Activated CD4-positive, alpha-beta T cell treated with anti-CD3 and anti-CD28 coated beads for 36 hours (primary cell): ENCODE measurements at regions of chr1 and their contacts with region 1.

Region 1: DNA sequence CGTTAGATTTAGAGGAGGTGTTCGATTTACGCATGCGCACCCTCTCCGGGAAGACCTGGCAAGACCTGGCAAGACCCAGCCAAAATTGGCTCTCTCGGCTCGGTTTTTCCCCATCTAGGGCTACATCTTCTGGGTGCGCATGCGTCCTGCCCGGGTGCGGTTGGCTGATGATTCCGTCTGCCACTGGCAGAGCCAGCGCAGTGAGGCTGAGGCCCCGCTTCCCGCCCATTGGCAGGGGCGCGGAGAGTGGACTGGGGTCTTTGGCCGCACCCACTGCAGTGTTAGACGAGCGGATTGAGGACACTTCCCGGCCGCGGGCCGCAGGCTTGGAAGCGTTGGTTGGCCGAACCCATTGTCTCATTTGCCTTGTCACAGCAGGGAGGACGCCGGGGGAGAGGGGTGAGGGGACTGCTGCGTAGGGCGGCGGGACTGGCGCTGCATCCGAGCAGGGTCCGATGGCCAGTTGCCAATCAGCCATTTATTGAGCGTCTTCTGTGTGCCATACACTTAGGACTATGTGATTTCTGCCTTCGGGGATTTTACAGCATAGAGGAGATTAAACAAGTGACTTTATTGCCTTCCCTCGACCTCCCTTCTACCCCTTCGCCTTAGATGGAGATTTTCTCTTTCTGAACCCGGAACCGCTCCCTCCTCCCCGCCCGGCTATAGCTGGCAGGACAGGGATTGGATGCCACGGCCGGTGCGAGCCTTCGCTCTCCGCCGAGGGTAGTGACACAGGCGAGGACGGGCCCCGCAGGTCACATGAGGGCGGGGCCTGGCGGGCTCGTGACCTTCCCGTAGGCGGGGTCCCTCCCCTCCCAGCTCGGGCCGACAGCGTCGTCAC is 43.7 kb downstream of the MEF2D start:
- DNase-seq: peak; percentile 99
- ATAC-seq: peak; percentile 88
- H3K4me3 Mint-ChIP-seq: peak overlapping the region; percentile 79
- H3K27ac Mint-ChIP-seq: peak overlapping the region; percentile 98
- H3K4me1 Mint-ChIP-seq: peaks cover 22% of the 10 kb centered on the region
- H3K27me3 Mint-ChIP-seq: no peaks in the 10 kb centered on the region

Region 2: GRCh38 chr1:156193488-156194299 is 263.1 kb before region 1 on chr1 and contains the start of gene SLC25A44:
- CTCF ChIA-PET with region 1: no interaction called
- POLR2A ChIA-PET with region 1: no interaction called
- intact Hi-C with region 1: loop called in 1 of 2 experiments (anchors 1 kb)
- DNase-seq: peak; percentile 98
- ATAC-seq: peak; percentile 96
- H3K4me3 Mint-ChIP-seq: peak within 1 kb of the TSS; percentile 100
- H3K27ac Mint-ChIP-seq: peak within 1 kb of the TSS; percentile 97
- H3K4me1 Mint-ChIP-seq: peaks cover 43% of the 10 kb centered on the region
- H3K27me3 Mint-ChIP-seq: no peaks in the 10 kb centered on the region
- total RNA-seq, gene SLC25A44: 42.4 to 51.9 TPM

Region 3: GRCh38 chr1:156480411-156481192 is 23.8 kb after region 1 on chr1:
- CTCF ChIA-PET with region 1: interaction called, 8 read pairs
- POLR2A ChIA-PET with region 1: no interaction called
- intact Hi-C with region 1: loop called in 1 of 2 experiments (anchors 2 kb)
- DNase-seq: peak; percentile 89
- ATAC-seq: peak; percentile 82
- H3K4me3 Mint-ChIP-seq: peak overlapping the region; percentile 25
- H3K27ac Mint-ChIP-seq: peak overlapping the region; percentile 72
- H3K4me1 Mint-ChIP-seq: peaks cover 64% of the 10 kb centered on the region
- H3K27me3 Mint-ChIP-seq: no peaks in the 10 kb centered on the region

Region 4: DNA sequence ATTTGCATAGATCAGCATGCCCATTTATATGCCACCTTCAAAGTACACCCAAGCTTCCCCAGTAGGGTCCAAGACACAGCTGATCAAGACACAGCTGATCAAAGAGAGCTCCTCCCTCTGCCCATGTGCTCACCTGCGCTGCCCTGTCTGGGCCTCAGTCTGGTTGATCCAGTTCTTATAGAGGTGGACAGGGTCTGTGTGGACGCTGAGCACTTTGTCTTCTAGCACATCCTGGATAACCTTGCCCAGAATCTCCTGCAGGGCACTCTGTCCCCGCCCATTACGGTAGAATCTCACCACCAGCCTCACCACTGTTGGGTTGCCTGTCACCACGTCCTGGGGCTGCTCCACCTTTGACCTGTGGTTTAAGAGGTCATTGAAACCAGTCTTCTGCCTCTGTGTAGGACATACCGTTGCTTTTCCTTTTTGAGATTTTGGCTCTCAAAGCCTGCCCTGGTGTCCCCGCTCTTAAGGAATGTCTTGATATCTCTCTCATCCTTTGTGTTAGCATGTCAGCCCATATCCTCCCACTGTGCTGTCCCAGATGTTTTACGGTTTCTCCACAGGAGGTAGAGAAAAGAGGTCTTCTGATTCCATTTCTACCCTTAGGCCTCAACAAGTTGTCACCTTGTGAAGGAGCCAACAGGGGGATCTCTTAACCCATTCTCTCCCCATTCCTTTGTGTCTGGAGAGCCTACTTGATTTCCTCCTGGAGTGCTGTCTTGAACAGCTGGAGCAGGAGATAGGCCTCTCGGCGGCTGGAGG is 82.0 kb after region 1 on chr1:
- CTCF ChIA-PET with region 1: no interaction called
- POLR2A ChIA-PET with region 1: no interaction called
- intact Hi-C with region 1: no loop called
- DNase-seq: no peak
- ATAC-seq: no peak
- H3K4me3 Mint-ChIP-seq: no peak overlapping the region
- H3K27ac Mint-ChIP-seq: no peak overlapping the region
- H3K4me1 Mint-ChIP-seq: no peaks in the 10 kb centered on the region
- H3K27me3 Mint-ChIP-seq: no peaks in the 10 kb centered on the region

Region 5: DNA sequence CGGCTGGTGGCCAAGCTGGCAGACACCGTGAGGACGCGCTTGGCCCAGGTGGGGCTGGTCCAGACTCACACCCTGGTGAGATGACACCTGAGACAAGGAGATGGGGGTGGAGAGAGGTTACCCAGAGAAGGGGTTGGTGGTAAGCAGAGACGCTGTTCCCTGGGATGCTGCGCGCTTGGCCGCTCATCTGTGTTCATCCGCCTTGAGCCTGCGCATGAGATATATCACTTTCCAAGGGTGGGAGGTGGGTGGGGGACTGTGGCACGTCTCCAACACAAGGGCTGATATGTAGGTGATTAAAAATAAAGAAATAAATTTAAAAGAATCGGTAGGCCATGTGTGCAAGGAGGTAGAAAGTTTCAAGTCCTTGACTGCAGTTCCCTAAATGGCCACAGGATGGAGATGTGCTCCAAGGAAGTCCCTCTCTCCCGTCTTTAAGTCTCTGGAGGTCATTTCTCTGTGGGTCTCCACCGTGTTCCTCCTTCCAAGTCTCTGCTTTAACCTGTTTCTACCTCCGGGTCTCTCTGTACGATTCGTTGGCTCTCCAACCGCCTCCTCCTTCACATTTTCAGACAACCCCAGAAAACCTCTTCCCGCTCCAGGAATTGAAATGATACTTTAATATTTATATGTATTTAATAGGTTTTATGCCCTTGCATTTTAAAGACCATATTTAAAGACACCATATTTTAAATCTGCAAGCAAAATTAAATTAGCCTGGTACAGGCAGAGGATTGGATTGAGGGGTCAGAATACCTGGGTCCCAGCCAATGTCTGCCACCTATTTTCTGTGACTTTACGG is 127.2 kb after region 1 on chr1:
- CTCF ChIA-PET with region 1: interaction called, 7 read pairs
- POLR2A ChIA-PET with region 1: no interaction called
- intact Hi-C with region 1: loop called in 1 of 2 experiments (anchors 1 kb)
- DNase-seq: peak; percentile 88
- ATAC-seq: peak; percentile 43
- H3K4me3 Mint-ChIP-seq: peak overlapping the region; percentile 74
- H3K27ac Mint-ChIP-seq: peak overlapping the region; percentile 51
- H3K4me1 Mint-ChIP-seq: peaks cover 27% of the 10 kb centered on the region
- H3K27me3 Mint-ChIP-seq: no peaks in the 10 kb centered on the region

Region 6: GRCh38 chr1:156601122-156601830 is 144.4 kb after region 1 on chr1 and contains the start of gene GPATCH4:
- CTCF ChIA-PET with region 1: interaction called, 6 read pairs
- POLR2A ChIA-PET with region 1: interaction called, 5 read pairs
- intact Hi-C with region 1: loop called (anchors 1 to 2 kb)
- DNase-seq: peak; percentile 89
- ATAC-seq: peak; percentile 76
- H3K4me3 Mint-ChIP-seq: peak within 1 kb of the TSS; percentile 97
- H3K27ac Mint-ChIP-seq: peak within 1 kb of the TSS; percentile 99
- H3K4me1 Mint-ChIP-seq: peaks cover 45% of the 10 kb centered on the region
- H3K27me3 Mint-ChIP-seq: no peaks in the 10 kb centered on the region
- total RNA-seq, gene GPATCH4: 38.5 to 48.7 TPM

Region 7: DNA sequence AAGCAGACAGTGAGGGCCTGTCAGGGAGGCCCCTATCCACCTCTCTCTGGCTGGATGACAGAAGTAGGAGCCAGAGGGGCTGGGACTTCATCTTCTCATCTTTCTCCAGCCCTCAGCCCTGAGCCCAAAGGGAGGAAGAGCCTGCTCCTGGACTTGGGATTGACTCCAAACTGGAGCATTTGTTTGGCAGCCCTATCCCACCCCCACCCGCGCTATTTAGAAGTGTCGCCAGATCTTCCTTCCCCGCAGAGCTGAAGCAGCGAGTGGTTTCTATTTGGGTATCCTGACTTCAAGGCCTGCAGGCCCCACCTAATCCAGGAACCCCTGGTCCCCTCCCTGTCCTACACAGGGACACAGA is 210.7 kb after region 1 on chr1:
- CTCF ChIA-PET with region 1: no interaction called
- POLR2A ChIA-PET with region 1: no interaction called
- intact Hi-C with region 1: no loop called
- DNase-seq: no peak
- ATAC-seq: no peak
- H3K4me3 Mint-ChIP-seq: no peak overlapping the region
- H3K27ac Mint-ChIP-seq: no peak overlapping the region
- H3K4me1 Mint-ChIP-seq: peaks cover 3% of the 10 kb centered on the region
- H3K27me3 Mint-ChIP-seq: peaks cover 9% of the 10 kb centered on the region

Region 8: DNA sequence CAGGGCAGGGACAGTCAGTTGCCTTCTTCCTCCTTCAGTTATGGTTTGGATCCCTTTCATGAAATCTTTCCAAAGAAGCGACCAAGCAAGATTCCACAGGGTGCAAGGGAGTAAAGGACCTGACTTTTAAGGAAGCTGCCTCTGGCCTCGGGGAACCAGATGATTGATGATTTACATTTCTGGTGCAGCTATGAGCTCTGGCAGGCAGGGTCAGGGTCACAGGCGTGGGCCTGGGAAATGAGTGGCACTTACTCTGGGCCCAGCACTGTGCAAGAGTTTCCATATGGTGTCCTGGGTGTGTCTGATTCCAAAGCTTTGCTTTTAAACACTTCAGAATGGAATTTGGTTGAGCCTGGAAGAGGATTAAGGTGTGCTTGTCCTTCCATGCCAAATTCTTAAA is 255.8 kb after region 1 on chr1:
- CTCF ChIA-PET with region 1: no interaction called
- POLR2A ChIA-PET with region 1: no interaction called
- intact Hi-C with region 1: no loop called
- DNase-seq: no peak
- ATAC-seq: no peak
- H3K4me3 Mint-ChIP-seq: no peak overlapping the region
- H3K27ac Mint-ChIP-seq: no peak overlapping the region
- H3K4me1 Mint-ChIP-seq: peaks cover 2% of the 10 kb centered on the region
- H3K27me3 Mint-ChIP-seq: no peaks in the 10 kb centered on the region

Region 9: GRCh38 chr1:156767101-156767878 is 310.4 kb after region 1 on chr1 and contains the start of gene PRCC:
- CTCF ChIA-PET with region 1: no interaction called
- POLR2A ChIA-PET with region 1: no interaction called
- intact Hi-C with region 1: loop called in 1 of 2 experiments (anchors 1 kb)
- DNase-seq: peak; percentile 98
- ATAC-seq: peak; percentile 96
- H3K4me3 Mint-ChIP-seq: no peak within 1 kb of the TSS
- H3K27ac Mint-ChIP-seq: no peak within 1 kb of the TSS
- H3K4me1 Mint-ChIP-seq: peaks cover 35% of the 10 kb centered on the region
- H3K27me3 Mint-ChIP-seq: no peaks in the 10 kb centered on the region
- total RNA-seq, gene PRCC: 80.4 to 110 TPM